Calu3 (cell line): ENCODE measurements at regions of chr10 and their contacts with region 1.

Region 1: GRCh38 chr10:130136226-130137089 is at the start of gene GLRX3:
- DNase-seq: peak; percentile 87
- H3K4me3 Mint-ChIP-seq: peak within 1 kb of the TSS; percentile 80
- H3K27ac Mint-ChIP-seq: peak within 1 kb of the TSS; percentile 95
- H3K4me1 Mint-ChIP-seq: peaks cover 8% of the 10 kb centered on the region
- H3K27me3 Mint-ChIP-seq: no peaks in the 10 kb centered on the region
- CTCF ChIP-seq: no peak
- total RNA-seq, gene GLRX3: 61.4 and 79.8 TPM in 2 replicates

Region 2: GRCh38 chr10:129466703-129467358 is 669.6 kb before region 1 on chr10 and contains the start of gene MGMT:
- CTCF ChIA-PET with region 1: interaction called, 10 read pairs
- intact Hi-C with region 1: no loop called
- DNase-seq: peak; percentile 78
- H3K4me3 Mint-ChIP-seq: peak within 1 kb of the TSS; percentile 49
- H3K27ac Mint-ChIP-seq: no peak within 1 kb of the TSS
- H3K4me1 Mint-ChIP-seq: no peaks in the 10 kb centered on the region
- H3K27me3 Mint-ChIP-seq: no peaks in the 10 kb centered on the region
- CTCF ChIP-seq: no peak
- total RNA-seq, gene MGMT: 7.3 and 8.3 TPM in 2 replicates

Region 3: GRCh38 chr10:130110246-130111112 is 26.0 kb before region 1 on chr10 and contains the start of gene C10orf143:
- CTCF ChIA-PET with region 1: interaction called, 20 read pairs
- intact Hi-C with region 1: loop called (anchors 1 kb)
- DNase-seq: peak; percentile 94
- H3K4me3 Mint-ChIP-seq: peak within 1 kb of the TSS; percentile 95
- H3K27ac Mint-ChIP-seq: peak within 1 kb of the TSS; percentile 85
- H3K4me1 Mint-ChIP-seq: peaks cover 10% of the 10 kb centered on the region
- H3K27me3 Mint-ChIP-seq: no peaks in the 10 kb centered on the region
- CTCF ChIP-seq: no peak
- total RNA-seq, gene C10orf143: 0.50 and 0.78 TPM in 2 replicates